ENCODE measurements at regions of chr2 and their contacts with region 1.

Region 1: DNA sequence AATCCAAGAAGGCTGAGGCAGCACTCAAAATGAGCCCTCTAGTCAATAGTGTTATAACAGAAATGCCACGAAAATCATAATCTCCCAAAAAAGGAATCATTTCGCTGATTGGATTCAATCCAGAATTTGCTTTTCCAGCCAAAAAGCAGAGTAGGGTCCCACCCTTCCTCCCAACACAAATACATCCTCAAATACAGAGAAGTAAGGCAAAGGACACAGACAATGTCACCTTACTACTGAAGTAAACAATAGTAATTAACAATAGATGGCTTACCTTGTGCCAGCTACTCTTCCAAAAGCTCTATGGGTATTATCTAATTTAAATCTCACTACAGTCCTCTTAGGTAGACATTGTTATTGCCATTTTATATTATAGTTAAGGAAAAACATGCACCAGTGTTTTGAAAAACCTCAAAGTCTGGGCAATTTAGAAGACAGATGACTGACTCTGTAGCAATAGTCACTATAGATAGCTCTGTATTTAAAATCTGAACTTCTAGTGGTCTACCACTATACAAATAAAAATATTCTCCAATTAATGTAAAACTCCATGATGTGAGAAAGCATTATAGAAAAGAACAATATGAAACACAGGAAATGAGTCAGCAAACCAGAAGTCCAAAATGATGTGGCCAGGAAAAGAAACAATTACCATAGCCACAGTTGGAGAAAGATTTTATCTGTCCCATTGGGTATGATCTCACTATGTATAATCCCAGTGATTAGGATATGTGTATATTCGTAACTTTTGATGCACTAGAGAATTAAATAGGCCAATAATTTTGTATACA is 305.0 kb upstream of the ERBB4 start:
- DNase-seq: peak; percentile 92
- ATAC-seq: peak; percentile 90
- H3K4me3 ChIP-seq: peak overlapping the region; percentile 4; the same call in 1 of the 2 replicates
- H3K27ac ChIP-seq: peak overlapping the region; percentile 98
- H3K4me1 ChIP-seq: peaks cover 44% of the 10 kb centered on the region
- H3K27me3 ChIP-seq: no peaks in the 10 kb centered on the region
- CTCF ChIP-seq: no peak

Region 2: DNA sequence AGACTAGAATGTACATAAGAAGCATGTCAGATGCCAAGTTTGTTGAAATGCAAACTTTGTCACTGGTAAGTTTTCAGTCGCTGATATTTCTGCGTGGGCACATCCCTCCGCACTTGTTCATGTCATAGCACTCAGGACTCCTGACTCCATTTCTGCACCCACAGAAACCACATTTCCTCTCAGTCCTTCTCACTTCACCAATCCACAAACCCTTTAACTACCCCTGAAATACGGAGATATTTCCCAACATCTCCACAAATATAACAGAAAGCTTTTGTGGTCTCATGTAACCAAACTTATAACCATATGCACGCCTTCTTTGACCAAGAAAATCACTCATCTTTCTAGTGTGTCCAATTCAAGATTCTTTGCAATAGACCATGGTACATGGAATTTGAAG is 28.2 kb before region 1 on chr2:
- CTCF ChIA-PET with region 1: no interaction called
- POLR2A ChIA-PET with region 1: interaction called, 11 read pairs
- intact Hi-C with region 1: no loop called
- DNase-seq: no peak
- ATAC-seq: no peak
- H3K4me3 ChIP-seq: no peak overlapping the region
- H3K27ac ChIP-seq: no peak overlapping the region
- H3K4me1 ChIP-seq: no peaks in the 10 kb centered on the region
- H3K27me3 ChIP-seq: no peaks in the 10 kb centered on the region
- CTCF ChIP-seq: no peak

Region 3: DNA sequence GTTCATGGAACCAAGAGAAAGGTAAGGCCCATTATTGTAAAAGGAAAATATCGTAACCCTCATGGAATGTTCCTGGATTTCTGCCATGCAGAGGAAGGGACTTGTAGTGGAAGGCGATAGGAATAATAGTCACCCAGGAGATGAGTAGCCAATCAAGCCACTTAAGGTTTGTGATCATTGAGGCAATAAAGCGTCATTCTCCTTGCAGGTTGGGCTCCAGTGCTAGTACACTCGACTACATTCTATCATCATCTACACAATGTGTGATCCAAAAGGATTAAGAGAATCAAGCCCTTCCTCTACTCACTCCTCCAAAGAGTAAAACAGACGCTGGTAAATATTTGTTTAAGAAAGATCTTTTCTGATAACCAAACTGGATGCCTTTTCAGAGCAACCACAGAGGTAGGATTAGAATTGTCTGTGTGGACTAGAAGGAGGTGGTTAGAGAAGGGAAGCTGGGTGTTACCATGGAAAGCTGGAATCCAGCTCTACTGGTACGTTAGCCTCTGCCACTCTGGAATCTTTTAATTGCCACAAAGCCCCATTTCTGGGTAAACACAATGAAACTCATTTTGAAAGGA is 62.1 kb after region 1 on chr2:
- CTCF ChIA-PET with region 1: no interaction called
- POLR2A ChIA-PET with region 1: no interaction called
- intact Hi-C with region 1: no loop called
- DNase-seq: peak; percentile 98
- ATAC-seq: peak; percentile 87
- H3K4me3 ChIP-seq: peak overlapping the region; percentile 52; the same call in 1 of the 2 replicates
- H3K27ac ChIP-seq: peak overlapping the region; percentile 95
- H3K4me1 ChIP-seq: peaks cover 51% of the 10 kb centered on the region
- H3K27me3 ChIP-seq: no peaks in the 10 kb centered on the region
- CTCF ChIP-seq: no peak

Measured in PC-3 (cell line).